Heart left ventricle (tissue), 16 donors: ENCODE measurements at regions of chr16 and their contacts with region 1.

Region 1: DNA sequence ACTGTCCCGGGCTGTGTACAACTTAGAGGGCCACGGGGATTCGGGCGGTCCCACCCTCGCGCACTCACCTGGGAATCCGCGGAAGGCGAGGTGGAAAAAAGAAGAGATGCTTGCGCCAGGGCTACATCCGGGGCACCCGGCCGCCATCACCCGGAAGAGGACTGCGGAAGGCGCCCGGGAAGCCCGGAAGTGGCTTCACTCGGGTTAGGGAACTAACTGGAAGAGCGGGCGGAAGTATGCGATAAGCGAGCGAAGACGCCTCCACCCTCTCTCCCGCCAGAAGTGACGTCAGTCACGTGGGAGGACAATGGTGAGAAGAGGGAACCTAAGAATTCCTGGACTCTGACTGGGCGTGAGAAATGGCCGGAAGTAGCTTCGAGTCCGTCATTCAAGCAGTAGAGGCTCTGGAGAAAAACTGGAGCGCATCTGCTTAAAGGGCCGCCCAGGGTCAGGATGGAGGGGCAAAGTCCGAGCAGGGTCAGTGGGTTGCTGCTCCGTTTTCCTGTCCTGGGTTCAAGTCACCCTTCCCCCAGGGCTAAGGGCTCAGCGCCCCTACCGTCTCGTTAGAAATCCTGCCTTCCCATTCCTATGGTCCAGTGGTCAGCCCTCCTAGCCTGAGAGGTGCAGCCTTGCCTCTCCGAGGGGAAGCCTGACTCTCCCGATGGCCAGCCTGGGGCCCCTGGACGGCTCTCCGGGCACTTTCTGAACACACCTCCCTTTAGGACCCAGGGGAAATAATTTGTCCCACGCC is at the start of gene CD2BP2:
- DNase-seq: peak; percentile 95 to 98 (median 97)
- ATAC-seq: peak; percentile 89 to 96 (median 92)
- H3K4me3 ChIP-seq: peak within 1 kb of the TSS; percentile 68 to 99 (median 85)
- H3K27ac ChIP-seq: peak within 1 kb of the TSS; percentile 91 to 99 (median 94)
- H3K4me1 ChIP-seq: peaks cover 12 to 47% (median 37%) of the 10 kb centered on the region in 12 donors
- H3K27me3 ChIP-seq: no peaks in the 10 kb centered on the region
- CTCF ChIP-seq: peak in 1 of 12 donors; percentile 9
- POLR2A ChIP-seq: peak in 1 of 2 donors; percentile 40
- total RNA-seq, gene CD2BP2: 21.5 to 54.5 (median 39.8) TPM

Region 2: GRCh38 chr16:30335598-30336474 is 19.5 kb before region 1 on chr16:
- intact Hi-C with region 1: loop called in 1 of 10 experiments (anchors 2 kb)
- DNase-seq: peak in 3 of 5 donors; percentile 25 to 56 (median 32)
- ATAC-seq: peak; percentile 28 to 65 (median 38)
- H3K4me3 ChIP-seq: peak overlapping the region; percentile 49 to 95 (median 78)
- H3K27ac ChIP-seq: peak overlapping the region in 11 of 12 donors; percentile 93 to 98 (median 97)
- H3K4me1 ChIP-seq: peaks cover 0 to 13% (median 7%) of the 10 kb centered on the region in 12 donors
- H3K27me3 ChIP-seq: no peaks in the 10 kb centered on the region
- CTCF ChIP-seq: no peak
- POLR2A ChIP-seq: no peak

Region 3: GRCh38 chr16:30370444-30371247 is 15.3 kb after region 1 on chr16 and contains the start of gene TBC1D10B:
- intact Hi-C with region 1: loop called in 2 of 10 experiments (anchors 1 to 2 kb)
- DNase-seq: peak; percentile 97 to 99 (median 98)
- ATAC-seq: peak; percentile 90 to 96 (median 94)
- H3K4me3 ChIP-seq: peak within 1 kb of the TSS; percentile 78 to 99 (median 91)
- H3K27ac ChIP-seq: peak within 1 kb of the TSS; percentile 78 to 95 (median 88)
- H3K4me1 ChIP-seq: peaks cover 0 to 49% (median 35%) of the 10 kb centered on the region in 12 donors
- H3K27me3 ChIP-seq: no peaks in the 10 kb centered on the region
- CTCF ChIP-seq: peak in 9 of 12 donors; percentile 7 to 54 (median 29)
- POLR2A ChIP-seq: peak in 1 of 2 donors; percentile 73
- total RNA-seq, gene TBC1D10B: 16.9 to 33.2 (median 24.2) TPM

Region 4: DNA sequence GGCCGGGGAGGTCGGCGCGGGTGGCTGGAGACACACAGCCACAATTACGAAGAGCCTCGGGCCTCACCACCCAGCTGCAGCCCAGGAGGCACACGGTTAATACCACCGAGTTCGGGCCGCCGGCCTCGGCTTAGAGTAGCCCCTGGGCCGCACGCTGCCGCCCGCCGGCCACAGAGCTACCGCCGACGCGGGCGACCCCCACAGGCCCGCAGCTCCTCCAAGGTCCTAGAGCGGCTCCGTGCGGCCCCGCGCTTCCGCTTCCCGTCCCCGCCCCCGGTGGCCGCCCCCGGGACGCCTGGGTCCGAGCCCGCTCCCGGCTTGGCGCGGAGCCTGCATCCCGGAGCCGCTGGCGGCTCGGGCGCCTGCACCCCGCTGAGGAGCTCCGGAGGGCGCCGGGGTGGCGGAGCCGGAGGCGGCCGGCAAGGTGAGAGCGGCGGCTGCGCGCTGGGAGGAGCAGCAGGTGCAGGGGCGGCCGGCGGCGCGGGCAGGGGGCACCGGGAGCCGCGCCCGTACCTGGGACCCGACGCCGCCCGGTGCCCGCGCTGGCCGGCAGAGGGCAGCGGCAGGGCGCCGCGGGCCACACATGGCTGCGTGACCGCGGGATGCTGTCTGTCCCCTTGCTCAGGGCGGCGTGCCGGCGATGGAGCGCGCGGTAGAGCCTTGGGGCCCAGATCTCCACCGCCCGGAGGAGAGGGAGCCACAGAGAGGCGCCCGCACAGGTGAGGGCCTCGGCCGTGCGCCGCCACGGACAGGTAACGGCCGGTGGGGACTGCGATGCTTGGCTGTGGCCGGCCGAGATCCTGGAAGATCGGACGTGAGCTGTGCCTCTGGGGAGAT is 40.1 kb after region 1 on chr16 and contains the start of gene ZNF48:
- intact Hi-C with region 1: loop called in 1 of 10 experiments (anchors 5 kb)
- DNase-seq: peak; percentile 89 to 94 (median 92)
- ATAC-seq: peak; percentile 93 to 98 (median 98)
- H3K4me3 ChIP-seq: peak within 1 kb of the TSS; percentile 58 to 99 (median 85)
- H3K27ac ChIP-seq: peak within 1 kb of the TSS; percentile 67 to 91 (median 84)
- H3K4me1 ChIP-seq: peaks cover 5 to 36% (median 21%) of the 10 kb centered on the region in 12 donors
- H3K27me3 ChIP-seq: no peaks in the 10 kb centered on the region
- CTCF ChIP-seq: peak in 8 of 12 donors; percentile 20 to 56 (median 41)
- POLR2A ChIP-seq: peak in 1 of 2 donors; percentile 47
- total RNA-seq, gene ZNF48: 4.1 to 10.3 (median 5.9) TPM

Region 5: DNA sequence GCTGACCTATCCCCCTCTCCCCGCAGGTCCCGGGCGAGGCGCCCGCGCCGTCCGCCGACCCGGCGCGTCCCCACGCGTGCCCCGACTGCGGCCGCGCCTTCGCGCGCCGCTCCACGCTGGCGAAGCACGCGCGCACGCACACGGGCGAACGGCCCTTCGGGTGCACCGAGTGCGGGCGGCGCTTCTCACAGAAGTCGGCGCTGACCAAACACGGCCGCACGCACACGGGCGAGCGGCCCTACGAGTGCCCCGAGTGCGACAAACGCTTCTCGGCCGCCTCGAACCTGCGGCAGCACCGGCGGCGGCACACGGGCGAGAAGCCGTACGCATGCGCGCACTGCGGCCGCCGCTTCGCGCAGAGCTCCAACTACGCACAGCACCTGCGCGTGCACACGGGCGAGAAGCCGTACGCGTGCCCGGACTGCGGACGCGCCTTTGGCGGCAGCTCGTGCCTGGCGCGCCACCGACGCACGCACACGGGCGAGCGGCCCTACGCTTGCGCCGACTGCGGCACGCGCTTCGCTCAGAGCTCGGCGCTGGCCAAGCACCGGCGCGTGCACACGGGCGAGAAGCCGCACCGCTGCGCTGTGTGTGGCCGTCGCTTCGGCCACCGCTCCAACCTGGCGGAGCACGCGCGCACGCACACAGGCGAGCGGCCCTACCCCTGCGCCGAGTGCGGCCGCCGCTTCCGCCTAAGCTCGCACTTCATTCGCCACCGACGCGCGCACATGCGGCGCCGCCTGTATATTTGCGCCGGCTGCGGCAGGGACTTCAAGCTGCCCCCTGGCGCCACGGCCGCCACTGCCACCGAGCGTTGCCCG is 62.4 kb after region 1 on chr16:
- intact Hi-C with region 1: loop called in 1 of 10 experiments (anchors 10 kb)
- DNase-seq: peak; percentile 84 to 93 (median 87)
- ATAC-seq: peak; percentile 89 to 96 (median 92)
- H3K4me3 ChIP-seq: peak overlapping the region; percentile 38 to 76 (median 64)
- H3K27ac ChIP-seq: peak overlapping the region; percentile 14 to 91 (median 77)
- H3K4me1 ChIP-seq: peaks cover 0 to 27% (median 10%) of the 10 kb centered on the region in 12 donors
- H3K27me3 ChIP-seq: no peaks in the 10 kb centered on the region
- CTCF ChIP-seq: peak in 7 of 12 donors; percentile 12 to 46 (median 28)
- POLR2A ChIP-seq: peak in 1 of 2 donors; percentile 45

Region 6: GRCh38 chr16:30445408-30446202 is 90.3 kb after region 1 on chr16 and contains the start of gene SEPHS2:
- intact Hi-C with region 1: no loop called
- DNase-seq: peak; percentile 96 to 98 (median 98)
- ATAC-seq: peak; percentile 92 to 98 (median 98)
- H3K4me3 ChIP-seq: peak within 1 kb of the TSS; percentile 72 to 97 (median 86)
- H3K27ac ChIP-seq: peak within 1 kb of the TSS; percentile 91 to 100 (median 97)
- H3K4me1 ChIP-seq: peaks cover 0 to 36% (median 17%) of the 10 kb centered on the region in 12 donors
- H3K27me3 ChIP-seq: no peaks in the 10 kb centered on the region
- CTCF ChIP-seq: peak in 11 of 12 donors; percentile 21 to 69 (median 44)
- POLR2A ChIP-seq: peak in 1 of 2 donors; percentile 94
- total RNA-seq, gene SEPHS2: 15.1 to 46.2 (median 30.0) TPM

Region 7: GRCh38 chr16:30786936-30787612 is 431.8 kb after region 1 on chr16 and contains the start of gene ZNF629:
- intact Hi-C with region 1: no loop called
- DNase-seq: peak; percentile 77 to 86 (median 84)
- ATAC-seq: peak; percentile 80 to 90 (median 84)
- H3K4me3 ChIP-seq: peak within 1 kb of the TSS; percentile 68 to 100 (median 92)
- H3K27ac ChIP-seq: peak within 1 kb of the TSS; percentile 89 to 98 (median 94)
- H3K4me1 ChIP-seq: peaks cover 0 to 26% (median 19%) of the 10 kb centered on the region in 12 donors
- H3K27me3 ChIP-seq: no peaks in the 10 kb centered on the region
- CTCF ChIP-seq: no peak
- POLR2A ChIP-seq: peak in 1 of 2 donors; percentile 38
- total RNA-seq, gene ZNF629: 14.3 to 30.9 (median 22.7) TPM